Activated CD4-positive, alpha-beta T cell treated with anti-CD3 and anti-CD28 coated beads for 36 hours (primary cell): ENCODE measurements at regions of chr19 and their contacts with region 1.

Region 1: GRCh38 chr19:13774217-13775191 is at the start of gene C19orf53:
- DNase-seq: peak; percentile 94
- ATAC-seq: peak; percentile 100
- H3K4me3 Mint-ChIP-seq: peak within 1 kb of the TSS; percentile 100
- H3K27ac Mint-ChIP-seq: peak within 1 kb of the TSS; percentile 95
- H3K4me1 Mint-ChIP-seq: peaks cover 17% of the 10 kb centered on the region
- H3K27me3 Mint-ChIP-seq: no peaks in the 10 kb centered on the region
- total RNA-seq, gene C19orf53: 115 to 142 TPM

Region 2: GRCh38 chr19:13526552-13526951 is 248.0 kb before region 1 on chr19:
- CTCF ChIA-PET with region 1: no interaction called
- POLR2A ChIA-PET with region 1: no interaction called
- intact Hi-C with region 1: no loop called
- DNase-seq: peak; percentile 57
- ATAC-seq: no peak
- H3K4me3 Mint-ChIP-seq: no peak overlapping the region
- H3K27ac Mint-ChIP-seq: no peak overlapping the region
- H3K4me1 Mint-ChIP-seq: no peaks in the 10 kb centered on the region
- H3K27me3 Mint-ChIP-seq: peaks cover 37% of the 10 kb centered on the region

Region 3: GRCh38 chr19:13731147-13731964 is 43.1 kb before region 1 on chr19:
- CTCF ChIA-PET with region 1: interaction called, 6 read pairs
- POLR2A ChIA-PET with region 1: no interaction called
- intact Hi-C with region 1: loop called in 1 of 2 experiments (anchors 1 kb)
- DNase-seq: peak; percentile 97
- ATAC-seq: peak; percentile 99
- H3K4me3 Mint-ChIP-seq: peak overlapping the region; percentile 87
- H3K27ac Mint-ChIP-seq: peak overlapping the region; percentile 94
- H3K4me1 Mint-ChIP-seq: peaks cover 25% of the 10 kb centered on the region
- H3K27me3 Mint-ChIP-seq: no peaks in the 10 kb centered on the region

Region 4: DNA sequence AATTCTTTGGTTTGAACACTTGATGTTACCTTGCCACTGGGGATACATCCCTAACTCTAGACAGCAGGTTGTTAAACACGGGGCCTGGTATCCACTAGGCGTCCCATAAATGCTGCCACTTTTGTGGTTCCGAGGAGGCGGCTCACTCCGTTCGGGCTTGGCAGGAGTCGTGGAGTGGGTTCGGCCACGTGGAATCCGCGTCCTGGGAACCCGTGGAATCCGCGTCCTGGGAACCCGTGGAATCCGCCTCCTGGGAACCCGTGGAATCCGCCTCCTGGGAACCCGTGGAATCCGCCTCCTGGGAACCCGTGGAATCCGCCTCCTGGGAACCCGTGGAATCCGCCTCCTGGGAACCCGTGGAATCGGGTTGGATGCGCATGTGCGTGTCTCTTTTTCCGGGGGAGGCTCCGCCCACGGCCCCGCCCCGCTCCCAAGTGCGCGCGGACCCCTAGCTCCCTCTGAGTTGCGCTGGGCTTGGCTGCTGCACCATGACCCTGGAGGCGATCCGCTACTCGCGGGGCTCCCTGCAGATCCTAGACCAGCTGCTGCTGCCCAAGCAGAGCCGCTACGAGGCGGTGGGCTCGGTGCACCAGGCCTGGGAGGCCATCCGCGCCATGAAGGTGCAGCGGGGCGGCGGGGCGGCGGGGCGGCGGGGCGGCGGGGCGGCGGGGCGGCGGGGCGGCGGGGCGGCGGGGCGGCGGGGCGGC is 10.2 kb before region 1 on chr19 and contains the start of gene MRI1:
- CTCF ChIA-PET with region 1: interaction called, 4 read pairs
- POLR2A ChIA-PET with region 1: interaction called, 5 read pairs
- intact Hi-C with region 1: loop called in 1 of 2 experiments (anchors 1 kb)
- DNase-seq: peak; percentile 77
- ATAC-seq: peak; percentile 86
- H3K4me3 Mint-ChIP-seq: peak within 1 kb of the TSS; percentile 90
- H3K27ac Mint-ChIP-seq: peak within 1 kb of the TSS; percentile 90
- H3K4me1 Mint-ChIP-seq: peaks cover 16% of the 10 kb centered on the region
- H3K27me3 Mint-ChIP-seq: no peaks in the 10 kb centered on the region
- total RNA-seq, gene MRI1: 35.9 to 39.9 TPM

Region 5: GRCh38 chr19:13794757-13795589 is 20.5 kb after region 1 on chr19 and contains the start of gene ZSWIM4:
- CTCF ChIA-PET with region 1: interaction called, 3 read pairs
- POLR2A ChIA-PET with region 1: interaction called, 3 read pairs
- intact Hi-C with region 1: loop called (anchors 1 kb)
- DNase-seq: peak; percentile 98
- ATAC-seq: peak; percentile 99
- H3K4me3 Mint-ChIP-seq: peak within 1 kb of the TSS; percentile 96
- H3K27ac Mint-ChIP-seq: peak within 1 kb of the TSS; percentile 94
- H3K4me1 Mint-ChIP-seq: peaks cover 24% of the 10 kb centered on the region
- H3K27me3 Mint-ChIP-seq: no peaks in the 10 kb centered on the region
- total RNA-seq, gene ZSWIM4: 5.6 to 5.8 TPM

Region 6: DNA sequence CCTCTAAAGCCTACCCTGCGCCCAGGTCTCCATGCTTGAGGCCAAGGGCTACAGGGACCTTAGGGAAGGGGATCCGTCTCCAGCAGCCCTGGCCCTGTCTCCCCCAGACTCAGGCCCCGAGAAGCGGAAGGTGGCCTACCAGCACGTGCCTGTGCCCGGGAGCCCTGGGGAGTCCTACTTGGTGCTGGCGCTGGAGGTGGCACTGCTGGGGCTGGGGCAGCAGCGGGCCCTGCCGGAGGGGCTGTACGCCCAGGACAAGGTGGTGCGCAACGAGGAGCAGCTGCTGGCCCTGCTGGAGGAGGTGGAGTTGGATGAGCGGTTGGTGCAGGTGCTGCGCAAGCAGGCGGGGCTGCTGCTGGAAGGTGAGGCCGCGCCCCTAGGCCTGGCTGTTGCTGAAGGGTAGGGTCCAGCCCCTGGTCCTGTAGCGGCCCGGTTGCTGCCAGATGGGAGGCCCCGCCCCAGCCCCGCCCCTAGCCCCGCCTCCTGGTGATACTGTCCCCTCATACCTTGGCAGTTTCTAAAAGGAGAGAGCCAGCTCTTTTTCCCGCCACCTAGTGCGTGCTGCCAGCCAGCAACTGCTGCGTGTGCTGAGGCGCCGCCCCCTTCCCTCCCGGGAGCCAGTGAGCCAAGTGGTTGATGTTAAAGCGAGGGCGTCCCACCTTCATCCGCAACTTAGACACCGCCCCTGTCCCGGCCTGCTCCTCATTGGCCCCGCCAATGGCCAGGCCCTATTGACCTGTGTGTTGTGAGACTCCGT is 43.3 kb after region 1 on chr19:
- CTCF ChIA-PET with region 1: no interaction called
- POLR2A ChIA-PET with region 1: no interaction called
- intact Hi-C with region 1: no loop called
- DNase-seq: peak; percentile 84
- ATAC-seq: peak; percentile 86
- H3K4me3 Mint-ChIP-seq: peak overlapping the region; percentile 60
- H3K27ac Mint-ChIP-seq: peak overlapping the region; percentile 33
- H3K4me1 Mint-ChIP-seq: peaks cover 5% of the 10 kb centered on the region
- H3K27me3 Mint-ChIP-seq: no peaks in the 10 kb centered on the region

Region 7: DNA sequence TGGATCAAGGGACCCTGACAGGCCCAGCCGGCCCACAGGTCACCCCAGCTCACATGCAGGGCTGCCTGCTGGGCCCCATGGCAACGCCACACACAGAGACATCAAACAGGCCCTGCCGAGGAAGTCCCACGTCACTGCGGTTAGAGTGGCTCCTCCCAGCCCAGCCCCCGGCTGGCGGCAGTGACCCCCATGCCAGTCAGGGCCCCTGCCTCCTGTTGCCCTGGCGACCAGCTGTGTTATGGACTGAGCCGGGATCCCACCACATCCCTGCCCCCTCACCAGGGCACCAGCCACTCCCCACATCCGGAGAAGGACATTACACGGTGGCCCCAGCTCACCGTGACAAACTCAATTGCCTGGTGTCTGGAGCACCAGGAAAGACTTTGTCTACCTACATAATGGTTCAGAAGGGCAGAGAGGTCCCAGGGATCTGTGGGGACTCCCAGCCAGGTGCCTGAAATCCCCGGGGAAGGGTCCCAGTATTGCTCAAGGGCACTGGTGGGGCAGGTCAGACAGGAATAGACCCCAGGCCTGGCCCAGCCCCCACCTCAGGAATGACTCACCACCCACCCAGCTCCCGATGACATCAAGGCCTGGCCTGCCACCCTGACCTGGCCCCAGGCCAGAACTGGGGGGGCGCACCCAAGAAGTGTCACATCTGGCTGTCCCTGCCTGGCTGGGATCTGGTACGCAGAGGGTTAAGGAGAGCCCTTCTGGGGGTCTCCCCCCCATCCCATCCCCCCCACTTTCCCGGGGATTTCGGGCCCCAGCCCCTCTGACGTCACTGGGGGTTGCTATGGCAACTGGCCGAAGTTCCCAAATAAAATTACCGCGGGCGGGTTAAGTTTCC is 72.3 kb after region 1 on chr19:
- CTCF ChIA-PET with region 1: interaction called, 3 read pairs
- POLR2A ChIA-PET with region 1: interaction called, 3 read pairs
- intact Hi-C with region 1: loop called in 1 of 2 experiments (anchors 1 kb)
- DNase-seq: peak; percentile 97
- ATAC-seq: peak; percentile 69
- H3K4me3 Mint-ChIP-seq: peak overlapping the region; percentile 71
- H3K27ac Mint-ChIP-seq: peak overlapping the region; percentile 97
- H3K4me1 Mint-ChIP-seq: peaks cover 56% of the 10 kb centered on the region
- H3K27me3 Mint-ChIP-seq: no peaks in the 10 kb centered on the region

Region 8: DNA sequence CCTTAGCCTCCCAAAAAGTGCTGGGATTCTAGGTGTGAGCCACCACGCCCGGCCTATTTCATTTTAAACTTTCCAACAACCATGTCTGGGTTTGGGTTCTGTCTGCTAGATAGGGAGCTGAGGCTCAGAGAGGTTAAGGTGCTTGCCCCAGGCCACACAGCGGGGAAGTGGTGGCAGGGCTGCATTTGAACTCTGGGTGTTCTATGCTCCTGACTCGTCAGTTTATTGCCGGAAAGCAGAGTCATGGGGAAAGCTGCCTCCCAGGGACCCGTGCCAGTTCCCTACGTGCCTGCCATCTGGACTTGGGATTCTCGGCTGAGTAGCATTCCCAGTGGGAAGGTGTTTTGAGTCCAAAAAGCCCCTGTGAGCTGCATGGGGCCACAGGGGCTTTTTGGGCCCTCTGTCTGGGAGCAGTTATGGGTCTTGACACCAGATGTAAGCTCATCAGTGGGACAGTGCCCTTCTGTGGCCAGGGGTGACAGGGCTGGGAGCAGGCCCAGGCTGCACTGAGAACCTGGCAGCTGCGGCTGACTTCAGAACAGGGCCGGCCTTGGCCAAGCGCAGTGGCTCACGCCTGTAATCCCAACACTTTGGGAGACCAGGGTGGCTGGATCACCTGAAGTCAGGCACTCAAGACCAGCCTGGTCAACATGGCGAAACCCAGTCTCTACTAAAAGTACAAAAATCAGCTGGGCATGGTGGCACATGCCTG is 220.7 kb after region 1 on chr19:
- CTCF ChIA-PET with region 1: no interaction called
- POLR2A ChIA-PET with region 1: no interaction called
- intact Hi-C with region 1: no loop called
- DNase-seq: no peak
- ATAC-seq: no peak
- H3K4me3 Mint-ChIP-seq: no peak overlapping the region
- H3K27ac Mint-ChIP-seq: no peak overlapping the region
- H3K4me1 Mint-ChIP-seq: peaks cover 4% of the 10 kb centered on the region
- H3K27me3 Mint-ChIP-seq: no peaks in the 10 kb centered on the region

Region 9: GRCh38 chr19:14073261-14073924 is 298.9 kb after region 1 on chr19:
- CTCF ChIA-PET with region 1: no interaction called
- POLR2A ChIA-PET with region 1: no interaction called
- intact Hi-C with region 1: loop called in 1 of 2 experiments (anchors 10 kb)
- DNase-seq: peak; percentile 87
- ATAC-seq: peak; percentile 74
- H3K4me3 Mint-ChIP-seq: peak overlapping the region; percentile 87
- H3K27ac Mint-ChIP-seq: peak overlapping the region; percentile 80
- H3K4me1 Mint-ChIP-seq: peaks cover 21% of the 10 kb centered on the region
- H3K27me3 Mint-ChIP-seq: peaks cover 2% of the 10 kb centered on the region

Region 10: DNA sequence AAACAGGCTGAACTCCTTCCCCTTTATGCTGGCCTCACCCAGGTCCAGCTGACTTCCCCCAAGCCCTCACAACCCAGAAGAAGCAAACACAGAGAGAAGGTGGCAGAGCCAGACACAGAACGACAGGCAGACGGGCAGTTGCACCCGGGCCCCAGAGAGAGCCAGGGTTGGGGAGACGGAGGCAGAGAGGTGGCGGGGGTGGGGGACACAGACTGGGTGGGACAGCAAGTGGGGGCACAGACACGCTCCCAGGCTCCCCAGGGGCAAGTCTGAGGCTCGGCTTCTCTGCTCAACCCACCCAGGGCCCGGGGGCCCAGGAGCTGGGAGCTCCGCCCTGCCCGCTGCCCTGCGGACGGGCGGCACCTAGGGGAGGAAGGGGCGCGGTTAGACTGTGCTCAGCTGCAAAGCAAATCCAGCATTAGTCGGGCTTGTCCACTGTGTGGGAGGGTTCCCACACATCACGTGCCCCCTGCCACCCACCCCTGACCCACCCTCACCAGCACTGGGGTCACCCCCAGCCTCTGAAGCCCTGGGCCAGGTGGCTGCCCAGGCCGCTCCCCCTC is 393.2 kb after region 1 on chr19:
- CTCF ChIA-PET with region 1: no interaction called
- POLR2A ChIA-PET with region 1: no interaction called
- intact Hi-C with region 1: no loop called
- DNase-seq: peak; percentile 48
- ATAC-seq: peak; percentile 63
- H3K4me3 Mint-ChIP-seq: peak overlapping the region; percentile 48
- H3K27ac Mint-ChIP-seq: no peak overlapping the region
- H3K4me1 Mint-ChIP-seq: peaks cover 26% of the 10 kb centered on the region
- H3K27me3 Mint-ChIP-seq: no peaks in the 10 kb centered on the region

Region 11: DNA sequence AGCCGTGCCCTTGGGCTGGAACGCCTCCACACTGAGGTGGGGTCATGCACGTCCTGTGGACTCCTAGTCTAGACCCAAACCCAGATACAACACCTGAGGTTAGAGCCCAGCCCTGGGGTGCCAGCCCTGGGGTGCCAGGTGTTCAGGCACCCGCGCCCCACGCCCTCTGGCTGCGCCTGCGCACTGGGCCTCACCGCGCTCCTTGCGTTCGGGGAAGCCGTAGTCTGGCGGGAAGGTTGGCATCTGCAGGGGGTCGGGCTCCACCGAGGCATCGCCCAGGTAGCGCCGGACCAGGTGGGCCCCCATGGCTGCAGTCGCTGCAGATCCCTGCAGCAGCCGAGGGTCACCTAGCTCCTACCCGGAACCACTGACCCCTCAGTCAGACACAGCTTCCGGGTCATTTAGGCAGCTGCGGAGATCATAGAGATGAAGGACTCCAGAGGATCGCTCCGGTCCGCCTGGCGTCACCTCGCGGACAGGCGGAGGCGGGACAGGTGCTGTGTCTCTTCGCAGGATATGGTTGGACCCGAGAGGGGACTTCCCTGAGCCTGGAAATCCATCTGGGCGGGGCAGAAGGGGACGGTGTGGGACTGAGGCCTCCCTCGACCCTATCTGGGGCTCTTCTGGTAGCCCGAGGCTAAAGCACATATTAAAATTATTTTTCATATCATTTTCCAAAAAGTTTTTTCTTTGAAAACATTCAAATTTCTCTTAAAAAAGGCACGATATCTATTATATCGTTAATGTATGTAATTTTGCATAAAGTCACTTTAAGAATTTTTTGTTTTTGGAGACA is 797.4 kb after region 1 on chr19 and contains the start of gene NDUFB7:
- CTCF ChIA-PET with region 1: no interaction called
- POLR2A ChIA-PET with region 1: no interaction called
- intact Hi-C with region 1: loop called in 1 of 2 experiments (anchors 1 kb)
- DNase-seq: peak; percentile 95
- ATAC-seq: peak; percentile 95
- H3K4me3 Mint-ChIP-seq: peak within 1 kb of the TSS; percentile 95
- H3K27ac Mint-ChIP-seq: peak within 1 kb of the TSS; percentile 92
- H3K4me1 Mint-ChIP-seq: peaks cover 36% of the 10 kb centered on the region
- H3K27me3 Mint-ChIP-seq: no peaks in the 10 kb centered on the region
- total RNA-seq, gene NDUFB7: 112 to 121 TPM